Mammary epithelial cell (primary cell): ENCODE measurements at regions of chr15 and their contacts with region 1.

Region 1: GRCh38 chr15:80629355-80629754 is 65.8 kb upstream of the ABHD17C start:
- DNase-seq: no peak
- H3K4me3 ChIP-seq: no peak overlapping the region
- H3K27ac ChIP-seq: no peak overlapping the region
- H3K4me1 ChIP-seq: no peaks in the 10 kb centered on the region
- H3K27me3 ChIP-seq: no peaks in the 10 kb centered on the region
- CTCF ChIP-seq: no peak

Region 2: DNA sequence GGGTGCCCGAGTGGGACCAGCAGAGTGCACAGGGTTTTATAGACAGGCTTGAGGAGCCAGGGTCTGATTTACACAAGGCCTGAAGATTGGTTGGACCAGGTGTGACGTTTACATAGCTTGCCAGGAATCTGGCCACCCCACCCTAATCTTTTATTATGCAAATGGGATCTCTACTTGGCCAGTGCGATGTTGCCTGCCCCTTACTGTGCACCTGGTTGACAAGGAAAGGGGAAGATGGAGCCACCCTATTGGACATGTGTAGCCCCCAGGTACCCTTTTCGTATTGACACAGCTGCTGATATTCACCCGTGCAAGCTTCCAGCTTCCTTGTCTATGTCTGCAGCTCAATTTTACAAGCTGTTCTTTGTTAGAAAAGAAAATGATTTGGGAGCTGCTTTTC is 93.1 kb before region 1 on chr15:
- CTCF ChIA-PET with region 1: no interaction called
- dilution Hi-C with region 1: loop called (anchors 5 kb)
- in situ Hi-C with region 1: no loop called
- intact Hi-C with region 1: no loop called
- DNase-seq: no peak
- H3K4me3 ChIP-seq: no peak overlapping the region
- H3K27ac ChIP-seq: no peak overlapping the region
- H3K4me1 ChIP-seq: no peaks in the 10 kb centered on the region
- H3K27me3 ChIP-seq: no peaks in the 10 kb centered on the region
- CTCF ChIP-seq: no peak